HEK293 (cell line): ENCODE measurements at regions of chr10 and their contacts with region 1.

Region 1: GRCh38 chr10:44300666-44301649 is 83.9 kb downstream of the CXCL12 start:
- H3K4me3 ChIP-seq: no peak overlapping the region
- H3K27ac ChIP-seq: peak overlapping the region; percentile 34; the same call in 1 of the 2 replicates
- H3K4me1 ChIP-seq: peaks cover 8% of the 10 kb centered on the region
- CTCF ChIP-seq: no peak

Region 2: GRCh38 chr10:44253769-44254462 is 47.0 kb before region 1 on chr10:
- CTCF ChIA-PET with region 1: no interaction called
- POLR2A ChIA-PET with region 1: no interaction called
- H3K4me3 ChIP-seq: no peak overlapping the region
- H3K27ac ChIP-seq: no peak overlapping the region
- H3K4me1 ChIP-seq: peaks cover 3% of the 10 kb centered on the region; the same call in 1 of the 2 replicates
- CTCF ChIP-seq: no peak

Region 3: DNA sequence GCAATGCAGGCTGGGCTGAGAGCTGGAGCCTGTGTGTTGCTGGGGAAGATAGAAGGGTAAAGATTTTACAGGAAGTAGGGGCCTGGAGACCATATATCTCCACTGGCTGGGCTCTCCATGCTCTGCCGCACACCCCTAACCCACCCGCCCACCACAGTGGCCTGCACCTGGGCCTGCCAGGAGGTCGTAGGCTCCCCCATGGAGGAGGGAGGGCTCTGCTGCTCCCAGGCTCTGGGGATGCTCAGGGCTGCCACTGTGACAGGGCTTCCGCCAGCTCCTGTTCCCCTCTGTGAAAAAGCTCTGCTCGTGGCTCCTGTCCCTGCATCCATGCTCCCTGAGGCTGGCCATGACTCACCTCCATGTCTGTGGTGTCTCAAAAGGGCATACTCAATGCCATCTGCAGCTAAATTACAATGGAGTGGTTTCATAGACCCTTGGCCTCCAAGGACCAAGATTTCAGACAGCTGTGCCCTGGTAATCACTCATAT is 22.1 kb before region 1 on chr10:
- CTCF ChIA-PET with region 1: no interaction called
- POLR2A ChIA-PET with region 1: no interaction called
- H3K4me3 ChIP-seq: no peak overlapping the region
- H3K27ac ChIP-seq: no peak overlapping the region
- H3K4me1 ChIP-seq: no peaks in the 10 kb centered on the region
- CTCF ChIP-seq: no peak

Region 4: DNA sequence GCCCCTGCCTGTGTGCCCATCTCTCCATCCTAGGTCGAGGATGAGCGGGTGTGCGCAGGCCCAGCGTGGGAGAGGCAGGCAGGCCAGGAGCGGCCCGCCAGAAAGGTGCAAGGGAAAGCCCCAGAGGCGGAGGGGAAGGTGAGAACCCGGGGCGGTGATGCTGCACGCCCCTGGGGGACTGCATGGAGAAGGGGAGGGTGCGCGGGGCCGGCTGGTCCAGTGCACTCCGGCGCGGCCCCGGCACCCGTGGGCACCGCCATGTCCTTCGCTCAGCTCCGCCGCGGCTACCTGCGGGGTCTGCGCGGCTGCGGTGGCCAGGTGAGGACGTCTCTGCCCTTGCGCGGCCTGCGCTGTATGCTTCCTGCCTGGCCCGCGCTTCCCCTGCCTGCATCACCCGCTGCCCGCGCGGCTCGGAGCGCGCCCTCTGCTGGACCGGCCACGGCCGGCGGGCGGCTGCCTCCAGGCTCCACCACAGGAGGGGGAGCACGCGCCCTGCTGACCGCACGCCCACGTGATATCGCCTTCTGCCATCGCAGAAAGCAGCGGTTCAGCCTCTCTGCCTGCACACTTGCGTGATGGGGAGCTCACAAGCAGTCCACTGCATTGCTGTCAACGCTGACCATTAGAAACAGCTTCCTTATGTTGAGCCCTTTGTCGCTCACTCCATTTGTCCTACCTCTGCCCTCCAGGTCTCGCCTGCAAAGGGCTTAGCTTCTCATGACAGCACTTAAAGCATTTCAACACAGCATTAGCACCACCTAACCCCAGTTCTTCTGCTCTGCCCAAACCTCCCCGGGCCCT is 10.0 kb after region 1 on chr10:
- CTCF ChIA-PET with region 1: interaction called, 10 read pairs
- POLR2A ChIA-PET with region 1: no interaction called
- H3K4me3 ChIP-seq: peak overlapping the region; percentile 12
- H3K27ac ChIP-seq: no peak overlapping the region
- H3K4me1 ChIP-seq: no peaks in the 10 kb centered on the region
- CTCF ChIP-seq: peak; percentile 97

Region 5: DNA sequence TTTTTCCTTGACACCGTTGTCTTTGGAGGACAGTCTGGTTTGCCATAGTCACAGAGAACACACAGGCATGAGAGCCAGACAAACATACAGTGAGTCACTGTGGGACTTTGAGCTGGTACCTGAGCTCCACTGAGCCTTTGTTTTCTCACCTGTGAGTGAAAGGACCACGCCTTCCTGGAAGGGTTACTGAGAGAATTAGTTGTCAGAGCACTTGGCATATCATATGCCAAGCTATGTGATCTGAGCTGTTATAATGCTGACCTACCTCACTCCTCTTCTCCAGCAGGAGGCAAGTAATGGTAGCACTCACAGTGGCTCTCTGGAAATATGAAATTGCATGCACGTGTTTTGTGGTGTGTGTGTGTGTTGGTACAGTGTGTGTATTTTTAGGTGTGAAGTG is 24.2 kb after region 1 on chr10:
- CTCF ChIA-PET with region 1: no interaction called
- POLR2A ChIA-PET with region 1: no interaction called
- H3K4me3 ChIP-seq: no peak overlapping the region
- H3K27ac ChIP-seq: no peak overlapping the region
- H3K4me1 ChIP-seq: peaks cover 3% of the 10 kb centered on the region; the same call in 1 of the 2 replicates
- CTCF ChIP-seq: no peak